Heart left ventricle (tissue), 16 donors: ENCODE measurements at regions of chr5 and their contacts with region 1.

Region 1: DNA sequence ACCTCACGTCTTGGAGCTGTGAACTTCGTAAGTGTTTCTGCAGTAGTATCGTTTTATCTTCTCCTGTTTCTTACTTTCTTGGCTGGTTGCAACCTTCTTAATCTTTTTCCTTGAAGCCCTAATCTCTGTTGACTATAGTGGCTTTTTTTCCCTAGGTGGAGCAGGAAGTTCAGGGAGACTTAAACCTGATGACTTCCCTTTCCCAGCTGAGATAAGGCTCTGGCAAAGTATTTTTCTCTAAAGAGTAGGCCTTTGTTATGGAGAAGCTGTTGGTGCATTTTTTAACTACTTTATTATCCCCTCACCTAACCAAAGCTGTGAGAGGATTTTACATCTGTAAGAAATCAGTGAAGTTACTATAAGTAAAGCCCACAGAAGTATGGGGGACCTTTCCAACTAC is 723.1 kb upstream of the RIOK2 start:
- DNase-seq: no peak
- ATAC-seq: peak in 2 of 4 donors; percentile 32 to 55
- H3K4me3 ChIP-seq: no peak overlapping the region
- H3K27ac ChIP-seq: peak overlapping the region in 1 of 12 donors; percentile 22
- H3K4me1 ChIP-seq: peaks cover 0 to 4% (median 0%) of the 10 kb centered on the region in 12 donors
- H3K27me3 ChIP-seq: no peaks in the 10 kb centered on the region
- CTCF ChIP-seq: no peak
- POLR2A ChIP-seq: no peak

Region 2: DNA sequence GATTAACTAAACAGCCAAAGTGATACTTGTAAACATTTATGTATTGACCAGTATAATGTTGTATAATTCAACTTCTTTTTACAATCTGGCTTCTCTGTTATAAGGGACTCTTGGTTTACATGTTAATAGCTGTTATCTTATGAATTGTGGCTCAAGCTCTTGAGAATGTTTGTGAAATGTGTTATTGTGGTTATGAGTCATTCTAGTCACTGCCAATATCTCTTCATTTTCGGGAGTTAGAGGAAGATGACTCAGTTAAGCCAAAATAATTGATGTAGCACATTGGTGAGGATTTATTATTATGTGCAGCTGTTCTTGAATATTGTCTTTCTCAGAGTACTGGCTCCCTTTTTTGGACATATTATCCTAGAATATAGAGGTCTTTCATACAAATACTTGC is 67.9 kb before region 1 on chr5:
- intact Hi-C with region 1: loop called in 1 of 10 experiments (anchors 10 kb)
- DNase-seq: no peak
- ATAC-seq: peak; percentile 37 to 95 (median 85)
- H3K4me3 ChIP-seq: no peak overlapping the region
- H3K27ac ChIP-seq: peak overlapping the region in 3 of 12 donors; percentile 8 to 35 (median 33)
- H3K4me1 ChIP-seq: peaks cover 0 to 39% (median 13%) of the 10 kb centered on the region in 12 donors
- H3K27me3 ChIP-seq: no peaks in the 10 kb centered on the region
- CTCF ChIP-seq: no peak
- POLR2A ChIP-seq: no peak

Region 3: GRCh38 chr5:97986069-97986468 is 79.9 kb after region 1 on chr5:
- intact Hi-C with region 1: no loop called
- DNase-seq: no peak
- ATAC-seq: no peak
- H3K4me3 ChIP-seq: no peak overlapping the region
- H3K27ac ChIP-seq: no peak overlapping the region
- H3K4me1 ChIP-seq: no peaks in the 10 kb centered on the region
- H3K27me3 ChIP-seq: no peaks in the 10 kb centered on the region
- CTCF ChIP-seq: peak in 1 of 12 donors; percentile 13
- POLR2A ChIP-seq: no peak

Region 4: GRCh38 chr5:98065261-98065909 is 159.2 kb after region 1 on chr5:
- intact Hi-C with region 1: no loop called
- DNase-seq: no peak
- ATAC-seq: no peak
- H3K4me3 ChIP-seq: no peak overlapping the region
- H3K27ac ChIP-seq: no peak overlapping the region
- H3K4me1 ChIP-seq: no peaks in the 10 kb centered on the region
- H3K27me3 ChIP-seq: no peaks in the 10 kb centered on the region
- CTCF ChIP-seq: no peak
- POLR2A ChIP-seq: no peak